GM12878 (cell line): ENCODE measurements at regions of chr2 and their contacts with region 1.

Region 1: GRCh38 chr2:69643602-69644505 is at the start of gene AAK1:
- DNase-seq: peak; percentile 68
- ATAC-seq: peak; percentile 69
- H3K4me3 ChIP-seq: peak within 1 kb of the TSS; percentile 85
- H3K27ac ChIP-seq: peak within 1 kb of the TSS; percentile 94
- H3K4me1 ChIP-seq: peaks cover 28% of the 10 kb centered on the region
- H3K27me3 ChIP-seq: no peaks in the 10 kb centered on the region
- CTCF ChIP-seq: 0 out of 6 replicates have a peak, but pooled peaks of 2 of the 3 experiments have one; percentile 0 to 2
- EP300 ChIP-seq: no peak
- POLR2A ChIP-seq: peak; percentile 93
- RAD21 ChIP-seq: no peak
- polyA plus RNA-seq, gene AAK1: 2.9 to 8.0 TPM

Region 2: GRCh38 chr2:69386789-69387734 is 256.8 kb before region 1 on chr2 and contains the start of gene GFPT1:
- CTCF ChIA-PET with region 1: interaction called, 7 read pairs
- POLR2A ChIA-PET with region 1: interaction called, 6 read pairs
- RAD21 ChIA-PET with region 1: no interaction called
- SMC1A ChIA-PET with region 1: no interaction called
- in situ Hi-C with region 1: no loop called
- intact Hi-C with region 1: loop called (anchors 10 kb)
- DNase-seq: peak; percentile 54
- ATAC-seq: peak; percentile 93
- H3K4me3 ChIP-seq: peak within 1 kb of the TSS; percentile 88
- H3K27ac ChIP-seq: peak within 1 kb of the TSS; percentile 82
- H3K4me1 ChIP-seq: peaks cover 12% of the 10 kb centered on the region; the same call in 1 of the 2 replicates
- H3K27me3 ChIP-seq: no peaks in the 10 kb centered on the region
- CTCF ChIP-seq: no peak
- EP300 ChIP-seq: no peak
- POLR2A ChIP-seq: peak; percentile 95
- RAD21 ChIP-seq: no peak
- polyA plus RNA-seq, gene GFPT1: 10.1 to 13.0 TPM

Region 3: GRCh38 chr2:69559442-69560146 is 84.3 kb before region 1 on chr2:
- CTCF ChIA-PET with region 1: interaction called, 44 read pairs
- POLR2A ChIA-PET with region 1: no interaction called
- RAD21 ChIA-PET with region 1: interaction called, 11 read pairs
- SMC1A ChIA-PET with region 1: interaction called, 25 read pairs
- in situ Hi-C with region 1: no loop called
- intact Hi-C with region 1: loop called (anchors 5 kb)
- DNase-seq: no peak
- ATAC-seq: peak; percentile 94
- H3K4me3 ChIP-seq: no peak overlapping the region
- H3K27ac ChIP-seq: no peak overlapping the region
- H3K4me1 ChIP-seq: peaks cover 9% of the 10 kb centered on the region
- H3K27me3 ChIP-seq: no peaks in the 10 kb centered on the region
- CTCF ChIP-seq: peak; percentile 74 to 85 (median 77)
- EP300 ChIP-seq: no peak
- POLR2A ChIP-seq: no peak
- RAD21 ChIP-seq: peak; percentile 93

Region 4: DNA sequence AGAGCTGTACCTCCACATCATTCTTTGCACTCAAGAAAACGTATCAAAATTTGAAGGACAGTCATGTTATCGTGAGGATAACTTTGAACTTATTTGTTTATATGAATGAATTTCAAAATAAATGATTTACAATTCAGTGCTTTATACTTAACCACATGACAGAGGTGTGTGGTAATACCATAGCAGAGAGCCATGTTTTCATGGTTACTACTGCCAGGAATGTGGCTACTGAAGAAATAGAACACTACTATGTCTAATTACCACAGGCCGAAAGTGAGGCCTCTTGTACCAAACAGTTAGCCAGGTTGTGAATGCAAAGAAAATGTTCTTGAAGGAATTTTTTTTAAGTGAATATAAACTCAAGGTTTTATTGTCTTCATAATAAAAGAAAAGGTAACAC is 49.5 kb before region 1 on chr2:
- CTCF ChIA-PET with region 1: interaction called, 4 read pairs
- POLR2A ChIA-PET with region 1: interaction called, 3 read pairs
- RAD21 ChIA-PET with region 1: no interaction called
- SMC1A ChIA-PET with region 1: interaction called, 10 read pairs
- in situ Hi-C with region 1: no loop called
- intact Hi-C with region 1: no loop called
- DNase-seq: no peak
- ATAC-seq: no peak
- H3K4me3 ChIP-seq: no peak overlapping the region
- H3K27ac ChIP-seq: no peak overlapping the region
- H3K4me1 ChIP-seq: peaks cover 21% of the 10 kb centered on the region
- H3K27me3 ChIP-seq: no peaks in the 10 kb centered on the region
- CTCF ChIP-seq: no peak
- EP300 ChIP-seq: no peak
- POLR2A ChIP-seq: no peak
- RAD21 ChIP-seq: no peak

Region 5: GRCh38 chr2:69717861-69718273 is 74.0 kb after region 1 on chr2:
- CTCF ChIA-PET with region 1: interaction called, 12 read pairs
- POLR2A ChIA-PET with region 1: interaction called, 7 read pairs
- RAD21 ChIA-PET with region 1: interaction called, 4 read pairs
- SMC1A ChIA-PET with region 1: interaction called, 17 read pairs
- in situ Hi-C with region 1: no loop called
- intact Hi-C with region 1: loop called (anchors 2 kb)
- DNase-seq: no peak
- ATAC-seq: peak; percentile 82
- H3K4me3 ChIP-seq: no peak overlapping the region
- H3K27ac ChIP-seq: no peak overlapping the region
- H3K4me1 ChIP-seq: peaks cover 12% of the 10 kb centered on the region; the same call in 1 of the 2 replicates
- H3K27me3 ChIP-seq: no peaks in the 10 kb centered on the region
- CTCF ChIP-seq: no peak
- EP300 ChIP-seq: peak in 1 of 2 experiments; percentile 9; a peak in 1 of 4 replicates
- POLR2A ChIP-seq: no peak
- RAD21 ChIP-seq: no peak